CD8-positive, alpha-beta T cell (primary cell): ENCODE measurements at regions of chr1 and their contacts with region 1.

Region 1: DNA sequence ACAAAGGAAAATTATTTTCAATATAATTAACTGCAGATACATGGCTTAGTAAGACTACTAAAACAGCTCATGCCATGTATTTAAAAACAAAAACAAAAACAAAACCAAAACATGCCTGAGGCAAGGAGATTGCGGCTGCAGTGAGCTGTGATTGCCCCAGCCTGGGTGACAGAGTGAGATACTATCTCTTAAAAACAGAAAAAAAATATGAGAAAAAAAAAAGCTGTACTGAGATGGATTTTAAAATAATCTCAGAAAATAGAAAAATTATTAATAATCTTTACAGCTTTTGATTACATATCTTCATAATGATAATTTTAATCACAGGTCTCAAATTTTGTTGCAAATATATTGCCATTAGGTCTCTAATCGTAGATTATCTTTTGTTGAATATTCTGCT is 24.0 kb upstream of the LIN9 start:
- DNase-seq: peak in 2 of 9 experiments; percentile 11 to 34
- ATAC-seq: no peak
- H3K4me3 ChIP-seq: no peak overlapping the region
- H3K4me3 Mint-ChIP-seq: peak overlapping the region; percentile 65
- H3K27ac ChIP-seq: no peak overlapping the region
- H3K27ac Mint-ChIP-seq: no peak overlapping the region
- H3K4me1 ChIP-seq: peaks cover 3% of the 10 kb centered on the region
- H3K4me1 Mint-ChIP-seq: peaks cover 6% of the 10 kb centered on the region
- H3K27me3 ChIP-seq: no peaks in the 10 kb centered on the region
- H3K27me3 Mint-ChIP-seq: peaks cover 2% of the 10 kb centered on the region
- CTCF ChIP-seq: no peak

Region 2: DNA sequence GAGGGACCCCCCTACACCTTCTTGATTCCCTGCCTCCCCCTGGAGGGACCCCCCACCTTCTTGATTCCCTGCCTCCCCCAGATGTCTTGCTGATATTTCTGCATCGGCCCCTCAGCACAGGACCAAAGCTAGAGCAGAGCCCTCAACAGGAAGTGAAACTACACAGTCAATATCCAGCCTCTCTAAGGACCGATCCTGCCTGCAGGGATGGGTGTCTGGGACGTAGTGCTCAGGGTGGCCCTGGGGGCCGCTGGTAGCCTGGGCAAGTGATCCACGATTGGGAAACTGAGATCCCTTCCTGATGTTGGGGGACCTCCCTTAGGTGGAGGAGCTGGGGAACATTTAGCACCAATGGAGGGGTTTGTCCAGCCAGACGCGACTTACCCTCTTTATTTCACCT is 388.0 kb before region 1 on chr1:
- CTCF ChIA-PET with region 1: no interaction called
- POLR2A ChIA-PET with region 1: no interaction called
- intact Hi-C with region 1: no loop called
- DNase-seq: peak in 1 of 9 experiments; percentile 35
- ATAC-seq: peak; percentile 52
- H3K4me3 ChIP-seq: no peak overlapping the region
- H3K4me3 Mint-ChIP-seq: peak overlapping the region; percentile 38
- H3K27ac ChIP-seq: no peak overlapping the region
- H3K27ac Mint-ChIP-seq: peak overlapping the region; percentile 42
- H3K4me1 ChIP-seq: peaks cover 13% of the 10 kb centered on the region
- H3K4me1 Mint-ChIP-seq: peaks cover 11% of the 10 kb centered on the region
- H3K27me3 ChIP-seq: no peaks in the 10 kb centered on the region
- H3K27me3 Mint-ChIP-seq: peaks cover 5% of the 10 kb centered on the region
- CTCF ChIP-seq: no peak

Region 3: DNA sequence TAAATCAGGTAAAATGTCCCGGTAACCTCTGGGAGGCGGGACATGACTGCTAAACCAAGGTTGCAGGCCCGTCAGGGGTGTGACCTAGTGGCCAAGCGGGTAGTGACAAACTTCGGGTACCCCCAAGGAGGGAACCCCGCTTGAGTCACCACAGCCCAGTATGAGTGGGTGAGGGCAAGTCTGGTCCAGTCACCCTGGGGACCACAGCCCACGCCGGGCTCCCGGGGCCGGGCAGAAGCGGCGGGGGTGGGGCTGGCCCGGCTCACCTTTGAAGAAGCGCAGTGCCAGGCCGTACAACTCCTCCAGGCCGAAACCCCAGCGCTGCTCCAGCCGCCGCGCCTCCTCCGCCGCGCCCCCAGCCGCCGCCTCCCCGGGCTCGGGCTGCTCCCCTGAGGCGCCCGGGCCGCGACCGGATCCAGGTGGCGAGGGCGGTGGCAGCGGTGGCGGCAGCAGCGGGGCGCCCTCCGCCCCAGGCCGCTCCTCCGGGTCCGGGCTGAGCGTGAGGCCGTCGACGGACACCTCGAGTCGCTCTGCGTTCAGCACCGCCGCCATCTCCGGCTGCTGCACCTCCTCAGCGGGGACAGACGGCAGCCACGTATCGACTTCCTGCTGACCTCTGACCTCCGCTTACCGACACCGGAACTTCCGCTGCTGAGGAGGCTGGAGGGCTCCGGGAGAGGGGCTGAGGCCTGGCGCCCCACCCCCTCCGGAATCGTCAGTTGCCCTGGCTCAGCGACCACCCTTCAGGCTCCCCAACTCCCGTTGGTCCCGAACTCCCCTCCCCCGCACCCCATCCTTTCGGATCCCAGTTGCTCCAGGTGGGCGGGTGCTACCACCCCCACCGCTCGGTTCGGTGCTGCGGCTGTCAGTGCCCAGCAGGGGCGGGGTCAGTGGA is 146.6 kb before region 1 on chr1 and contains the start of gene ACBD3:
- CTCF ChIA-PET with region 1: no interaction called
- POLR2A ChIA-PET with region 1: no interaction called
- intact Hi-C with region 1: loop called in 1 of 2 experiments (anchors 10 kb)
- DNase-seq: peak; percentile 67 to 95 (median 87)
- ATAC-seq: peak; percentile 97
- H3K4me3 ChIP-seq: peak within 1 kb of the TSS; percentile 82 to 90
- H3K4me3 Mint-ChIP-seq: peak within 1 kb of the TSS; percentile 92
- H3K27ac ChIP-seq: peak within 1 kb of the TSS; percentile 72 to 88
- H3K27ac Mint-ChIP-seq: peak within 1 kb of the TSS; percentile 95
- H3K4me1 ChIP-seq: peaks cover 41% of the 10 kb centered on the region
- H3K4me1 Mint-ChIP-seq: peaks cover 40% of the 10 kb centered on the region
- H3K27me3 ChIP-seq: no peaks in the 10 kb centered on the region
- H3K27me3 Mint-ChIP-seq: no peaks in the 10 kb centered on the region
- CTCF ChIP-seq: no peak
- total RNA-seq, gene ACBD3: 40.9 to 41.4 TPM

Region 4: DNA sequence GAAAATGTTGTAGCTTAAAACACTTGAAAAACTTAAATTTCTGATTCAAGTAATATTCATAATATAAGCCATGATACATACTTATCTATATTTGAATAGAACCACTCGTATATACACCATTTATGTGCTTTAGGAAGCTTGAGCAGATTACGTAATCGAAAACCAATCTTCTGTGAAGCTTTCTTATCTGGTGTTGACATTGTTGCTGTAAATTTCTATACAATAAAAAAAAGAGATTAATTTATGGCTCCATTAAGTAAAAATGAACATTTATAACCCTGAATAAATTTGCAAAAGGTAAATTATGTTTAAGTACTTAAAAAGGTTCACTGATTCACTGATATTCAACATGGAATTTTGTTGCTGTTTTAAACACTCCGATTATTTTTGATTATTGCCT is 45.4 kb before region 1 on chr1:
- CTCF ChIA-PET with region 1: interaction called, 6 read pairs
- POLR2A ChIA-PET with region 1: no interaction called
- intact Hi-C with region 1: loop called in 1 of 2 experiments (anchors 5 kb)
- DNase-seq: no peak
- ATAC-seq: no peak
- H3K4me3 ChIP-seq: no peak overlapping the region
- H3K4me3 Mint-ChIP-seq: no peak overlapping the region
- H3K27ac ChIP-seq: no peak overlapping the region
- H3K27ac Mint-ChIP-seq: no peak overlapping the region
- H3K4me1 ChIP-seq: no peaks in the 10 kb centered on the region
- H3K4me1 Mint-ChIP-seq: no peaks in the 10 kb centered on the region
- H3K27me3 ChIP-seq: no peaks in the 10 kb centered on the region
- H3K27me3 Mint-ChIP-seq: no peaks in the 10 kb centered on the region
- CTCF ChIP-seq: no peak

Region 5: GRCh38 chr1:226547754-226548191 is 214.8 kb after region 1 on chr1:
- CTCF ChIA-PET with region 1: no interaction called
- POLR2A ChIA-PET with region 1: no interaction called
- intact Hi-C with region 1: no loop called
- DNase-seq: peak; percentile 34 to 78 (median 56)
- ATAC-seq: peak; percentile 43
- H3K4me3 ChIP-seq: no peak overlapping the region
- H3K4me3 Mint-ChIP-seq: peak overlapping the region; percentile 58
- H3K27ac ChIP-seq: no peak overlapping the region
- H3K27ac Mint-ChIP-seq: no peak overlapping the region
- H3K4me1 ChIP-seq: peaks cover 20% of the 10 kb centered on the region
- H3K4me1 Mint-ChIP-seq: peaks cover 23% of the 10 kb centered on the region
- H3K27me3 ChIP-seq: peaks cover 6 to 18% of the 10 kb centered on the region in 2 experiments
- H3K27me3 Mint-ChIP-seq: peaks cover 25% of the 10 kb centered on the region
- CTCF ChIP-seq: peak; percentile 62